ENCODE measurements at regions of chr6 and their contacts with region 1.

Region 1: DNA sequence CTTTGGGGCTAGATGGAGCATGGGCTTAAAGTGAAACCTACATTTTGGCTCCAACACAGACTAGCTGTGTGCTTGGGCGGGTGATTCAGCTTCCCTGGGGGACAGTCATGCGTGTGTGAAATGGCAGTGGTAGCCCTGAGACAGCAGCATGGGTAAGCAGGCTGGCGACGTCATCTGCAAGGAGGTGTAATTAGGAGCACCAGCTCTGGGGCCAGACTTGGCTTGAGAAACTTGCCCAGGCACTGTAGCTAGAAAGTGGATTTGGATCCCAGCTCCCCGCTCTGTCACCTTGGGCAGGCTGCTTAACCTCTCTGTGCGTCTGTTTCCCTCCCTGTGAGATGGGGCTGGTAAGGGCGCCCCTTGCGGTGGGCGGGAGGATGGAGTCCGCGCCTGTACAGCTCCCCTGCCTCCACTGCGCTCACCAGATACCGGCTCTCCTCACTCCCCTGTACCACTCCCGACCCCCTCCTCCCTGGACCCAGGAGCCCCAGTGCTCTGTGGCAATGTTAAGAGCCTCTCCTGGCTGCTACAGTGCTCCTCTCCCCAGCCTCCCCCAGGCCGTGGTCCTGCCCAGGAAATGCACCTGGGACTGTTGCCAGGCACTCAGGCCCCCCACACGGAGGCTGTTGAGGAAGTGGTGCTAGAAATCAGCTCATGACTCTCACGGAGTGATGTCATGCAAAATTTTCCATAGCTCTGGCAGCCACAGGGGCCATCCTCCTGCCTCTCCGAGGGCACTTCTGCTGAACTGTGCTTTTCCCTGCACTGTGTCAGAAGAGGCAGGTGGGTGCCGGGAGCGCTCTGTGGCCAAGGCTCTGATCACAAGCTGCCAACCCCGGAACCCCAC is 44.6 kb downstream of the SYNJ2 start:
- DNase-seq: peak; percentile 98
- H3K4me3 ChIP-seq: no peak overlapping the region
- H3K27ac ChIP-seq: peak overlapping the region; percentile 83
- H3K4me1 ChIP-seq: peaks cover 32% of the 10 kb centered on the region
- H3K27me3 ChIP-seq: no peaks in the 10 kb centered on the region
- CTCF ChIP-seq: peak; percentile 74 to 90
- POLR2A ChIP-seq: no peak

Region 2: DNA sequence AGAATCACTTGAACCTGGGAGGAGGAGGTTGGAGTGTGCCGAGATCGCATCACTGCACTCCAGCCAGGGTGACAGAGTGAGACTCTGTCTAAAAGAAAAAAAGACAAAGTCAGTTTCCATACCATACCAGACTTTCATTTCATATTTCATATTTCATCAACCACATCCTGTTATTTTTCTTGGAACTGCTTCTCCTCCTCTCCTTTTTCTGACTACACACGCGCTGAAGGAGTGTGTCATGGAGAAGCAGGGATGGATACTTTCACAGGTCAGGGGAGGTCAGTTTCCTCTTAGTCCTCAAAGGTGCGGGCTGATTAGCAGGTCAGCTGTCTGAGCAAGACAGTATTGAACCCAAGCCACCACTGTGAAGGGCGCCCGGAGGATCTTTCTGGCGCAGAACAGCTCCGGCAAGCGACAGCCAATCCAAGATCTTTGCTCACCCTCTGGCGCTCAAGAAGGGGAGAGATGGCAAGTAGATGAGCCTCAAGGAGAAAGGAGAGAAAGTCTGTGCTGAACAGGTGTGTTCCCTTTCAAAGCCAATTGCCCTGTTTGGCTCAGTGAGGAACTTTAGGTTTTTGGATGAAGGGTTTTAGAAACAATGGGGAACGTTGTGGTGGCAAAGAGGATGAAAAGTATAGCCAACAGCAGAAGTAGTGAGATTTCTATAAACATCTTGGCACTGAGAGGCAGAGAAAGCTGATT is 63.5 kb before region 1 on chr6:
- CTCF ChIA-PET with region 1: interaction called, 10 read pairs
- POLR2A ChIA-PET with region 1: interaction called, 3 read pairs
- dilution Hi-C with region 1: no loop called
- intact Hi-C with region 1: no loop called
- DNase-seq: peak; percentile 80
- H3K4me3 ChIP-seq: no peak overlapping the region
- H3K27ac ChIP-seq: peak overlapping the region; percentile 50
- H3K4me1 ChIP-seq: peaks cover 9% of the 10 kb centered on the region
- H3K27me3 ChIP-seq: no peaks in the 10 kb centered on the region
- CTCF ChIP-seq: no peak
- POLR2A ChIP-seq: no peak

Region 3: DNA sequence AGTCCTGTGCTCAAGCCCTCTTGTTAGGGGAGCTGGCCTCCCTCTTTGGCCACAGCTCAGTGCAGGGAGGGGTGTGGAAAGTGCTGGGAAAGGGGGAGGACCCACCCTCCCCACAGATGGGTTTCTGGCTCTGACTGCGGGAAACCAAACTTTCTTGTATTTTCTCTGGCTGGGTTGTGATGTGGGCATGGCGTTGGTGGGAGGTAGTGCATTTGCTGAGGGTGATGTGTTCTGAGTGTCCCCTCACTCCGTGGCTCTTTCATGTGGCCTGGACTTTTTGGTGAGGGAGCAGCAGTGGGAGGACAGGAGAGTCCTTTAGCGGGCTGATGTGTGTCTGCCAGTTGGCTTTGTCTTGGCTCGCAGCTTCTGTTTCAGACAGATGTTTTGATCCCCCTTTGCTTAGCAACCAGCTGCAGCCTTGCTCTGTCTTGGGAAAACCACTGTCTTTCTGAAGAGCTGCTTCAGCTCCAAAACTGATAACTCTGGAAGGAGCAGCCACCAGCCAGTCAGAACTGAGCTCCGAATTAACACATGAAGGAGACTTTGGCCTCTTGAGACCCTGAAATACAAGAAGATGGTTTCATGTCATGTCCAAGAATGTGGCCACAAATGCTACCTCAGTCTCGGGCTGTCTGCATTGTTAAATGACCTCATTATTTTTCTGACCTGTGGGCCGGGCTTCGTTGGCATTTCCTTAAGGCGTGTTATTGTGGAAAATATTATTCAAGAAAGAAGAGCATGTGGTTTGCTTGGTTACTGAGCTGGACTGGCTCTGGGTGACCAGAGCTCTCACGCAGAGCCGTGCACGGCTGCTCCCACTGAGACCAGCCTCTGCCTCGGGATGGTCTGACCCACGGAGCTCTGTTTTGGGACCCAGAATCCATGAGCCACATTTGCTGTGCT is 23.1 kb before region 1 on chr6:
- CTCF ChIA-PET with region 1: interaction called, 19 read pairs
- POLR2A ChIA-PET with region 1: interaction called, 3 read pairs
- dilution Hi-C with region 1: no loop called
- intact Hi-C with region 1: loop called (anchors 1 kb)
- DNase-seq: peak; percentile 97
- H3K4me3 ChIP-seq: no peak overlapping the region
- H3K27ac ChIP-seq: peak overlapping the region; percentile 91
- H3K4me1 ChIP-seq: peaks cover 32% of the 10 kb centered on the region
- H3K27me3 ChIP-seq: no peaks in the 10 kb centered on the region
- CTCF ChIP-seq: no peak
- POLR2A ChIP-seq: peak; percentile 43

Region 4: DNA sequence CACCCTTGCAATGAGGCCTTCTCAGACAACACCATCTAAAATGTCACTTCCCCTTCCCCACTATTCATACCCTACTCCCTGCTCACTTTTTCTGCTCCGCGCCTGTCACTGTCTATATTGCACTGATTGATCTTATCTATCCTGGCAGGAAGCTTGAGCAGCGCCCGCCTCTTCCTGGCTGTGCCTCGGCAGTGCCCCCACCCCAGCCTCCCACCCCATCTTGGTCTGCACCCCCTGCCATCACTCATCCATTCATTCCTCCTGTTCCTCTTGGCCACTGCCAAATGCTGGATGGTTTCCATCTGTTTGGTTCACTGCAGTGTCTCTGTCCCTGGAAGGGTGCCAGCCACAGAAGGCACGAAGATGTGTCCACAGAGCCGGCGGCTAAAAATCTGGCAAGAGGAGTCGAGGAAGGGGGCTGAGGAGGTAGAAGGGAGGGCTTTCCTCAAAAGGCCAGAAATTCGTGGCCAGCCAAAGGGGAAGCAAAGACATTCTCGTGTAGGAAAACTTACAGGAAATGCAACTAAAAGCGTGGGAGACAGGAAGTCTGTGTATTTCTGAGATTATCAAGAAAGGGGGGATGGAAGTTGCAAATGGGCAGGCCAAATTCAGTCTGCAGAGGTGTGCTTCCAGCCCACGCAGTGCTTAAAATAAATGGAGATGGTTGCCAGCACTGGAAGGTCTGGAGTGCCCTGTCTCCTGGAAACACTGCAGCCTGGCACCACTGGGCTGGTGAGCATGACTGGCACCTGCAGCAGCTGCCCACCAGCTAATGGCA is 17.0 kb before region 1 on chr6:
- CTCF ChIA-PET with region 1: interaction called, 19 read pairs
- POLR2A ChIA-PET with region 1: no interaction called
- dilution Hi-C with region 1: no loop called
- intact Hi-C with region 1: loop called (anchors 1 kb)
- DNase-seq: peak; percentile 89
- H3K4me3 ChIP-seq: no peak overlapping the region
- H3K27ac ChIP-seq: peak overlapping the region; percentile 79
- H3K4me1 ChIP-seq: peaks cover 48% of the 10 kb centered on the region
- H3K27me3 ChIP-seq: no peaks in the 10 kb centered on the region
- CTCF ChIP-seq: no peak
- POLR2A ChIP-seq: no peak

Region 5: GRCh38 chr6:158048589-158048988 is 22.3 kb after region 1 on chr6:
- CTCF ChIA-PET with region 1: no interaction called
- POLR2A ChIA-PET with region 1: no interaction called
- dilution Hi-C with region 1: no loop called
- intact Hi-C with region 1: no loop called
- DNase-seq: no peak
- H3K4me3 ChIP-seq: no peak overlapping the region
- H3K27ac ChIP-seq: no peak overlapping the region
- H3K4me1 ChIP-seq: no peaks in the 10 kb centered on the region
- H3K27me3 ChIP-seq: no peaks in the 10 kb centered on the region
- CTCF ChIP-seq: no peak
- POLR2A ChIP-seq: no peak

Region 6: DNA sequence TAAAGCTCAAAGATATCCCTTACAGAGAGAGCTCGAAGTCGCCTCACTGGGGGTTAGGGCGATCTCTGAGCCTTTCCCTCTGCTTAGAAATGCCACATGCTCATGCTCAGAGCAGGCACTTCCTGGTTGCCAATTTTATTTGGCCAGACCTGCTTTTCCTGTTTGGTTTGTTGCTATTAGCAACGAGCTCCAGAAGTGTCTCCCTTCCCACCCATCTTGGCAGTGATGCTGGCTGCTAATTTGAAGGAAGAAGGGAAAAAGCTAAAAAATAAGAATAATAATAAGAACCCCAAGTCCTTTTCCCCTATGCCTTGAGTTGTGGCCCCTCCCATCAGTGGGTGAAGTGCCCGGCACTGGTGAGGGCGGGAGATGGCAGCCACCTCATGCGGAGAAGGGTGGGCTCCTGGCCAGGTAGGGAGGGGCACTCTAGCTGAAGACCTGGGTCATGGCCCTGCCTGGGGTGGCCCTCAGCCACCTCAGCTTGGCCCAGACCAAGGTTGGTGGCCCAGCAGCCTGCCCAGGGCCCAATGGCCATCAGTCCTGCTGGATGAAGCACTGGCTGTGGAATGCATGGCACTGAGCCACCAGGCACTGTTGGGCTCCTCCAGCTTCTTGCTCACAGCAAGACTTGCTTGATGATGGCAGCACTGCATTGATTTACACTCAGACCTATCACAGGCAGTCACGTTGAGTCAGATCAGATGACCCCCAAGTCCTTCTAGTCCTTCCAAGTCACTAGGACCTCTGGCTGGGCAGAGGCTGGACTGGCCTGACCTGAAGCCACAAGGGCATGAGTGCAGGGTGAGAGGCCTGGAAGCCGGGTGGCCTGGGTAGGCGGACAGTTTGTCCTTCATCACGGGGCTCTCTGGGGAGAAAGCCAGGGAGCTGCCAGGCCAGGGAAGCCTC is 34.4 kb after region 1 on chr6:
- CTCF ChIA-PET with region 1: interaction called, 8 read pairs
- POLR2A ChIA-PET with region 1: interaction called, 4 read pairs
- dilution Hi-C with region 1: no loop called
- intact Hi-C with region 1: loop called (anchors 1 kb)
- DNase-seq: peak; percentile 92
- H3K4me3 ChIP-seq: no peak overlapping the region
- H3K27ac ChIP-seq: peak overlapping the region; percentile 99
- H3K4me1 ChIP-seq: peaks cover 62% of the 10 kb centered on the region
- H3K27me3 ChIP-seq: no peaks in the 10 kb centered on the region
- CTCF ChIP-seq: no peak
- POLR2A ChIP-seq: no peak

Region 7: DNA sequence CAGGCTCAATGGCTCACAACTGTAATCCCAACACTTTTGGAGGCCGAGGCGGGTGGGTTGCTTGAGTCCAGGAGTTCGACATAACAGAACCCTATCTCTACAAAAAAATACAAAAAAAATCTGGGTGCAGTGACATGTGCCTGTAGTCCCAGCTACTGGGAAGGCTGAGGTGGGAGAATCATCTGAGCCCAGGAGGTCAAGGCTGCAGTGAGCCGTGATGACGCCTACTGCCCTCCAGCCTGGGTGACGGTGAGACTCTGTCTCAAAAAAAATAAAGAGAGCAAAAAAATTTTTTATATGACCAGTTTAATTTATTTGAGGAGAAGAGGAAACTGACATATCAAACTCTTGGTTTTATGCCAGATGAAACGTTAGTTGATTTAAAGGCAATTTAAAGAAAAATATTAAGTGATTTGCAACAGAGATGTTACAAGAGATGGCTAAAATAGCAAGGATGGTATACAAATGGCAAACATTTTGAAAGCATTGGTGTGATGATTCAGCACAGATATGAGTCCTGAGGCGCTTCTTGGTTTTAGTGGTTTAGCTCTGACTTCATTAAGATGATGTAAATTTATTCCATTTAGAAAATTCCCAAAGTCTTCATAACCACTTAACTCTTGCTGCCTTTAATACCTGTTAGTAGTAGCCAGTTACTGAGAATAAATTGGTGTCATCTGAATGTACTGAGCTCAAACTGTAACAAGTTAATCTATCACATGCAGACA is 159.6 kb after region 1 on chr6:
- CTCF ChIA-PET with region 1: no interaction called
- POLR2A ChIA-PET with region 1: no interaction called
- dilution Hi-C with region 1: no loop called
- intact Hi-C with region 1: no loop called
- DNase-seq: no peak
- H3K4me3 ChIP-seq: no peak overlapping the region
- H3K27ac ChIP-seq: no peak overlapping the region
- H3K4me1 ChIP-seq: no peaks in the 10 kb centered on the region
- H3K27me3 ChIP-seq: no peaks in the 10 kb centered on the region
- CTCF ChIP-seq: no peak
- POLR2A ChIP-seq: no peak